Activated T-helper 1 cell treated with anti-CD3 and anti-CD28 coated beads, Interleukin-12 subunit alpha, Interleukin-12 subunit beta, Interleukin-2, Interleukin-4 antibody, amounts not matched to agents 30 ng/mL and 10 ng/mL and 1 ng/mL, durations not matched to agents 14 hours and 24 hours and 36 hours (primary cell): ENCODE measurements at regions of chr7 and their contacts with region 1.

Region 1: DNA sequence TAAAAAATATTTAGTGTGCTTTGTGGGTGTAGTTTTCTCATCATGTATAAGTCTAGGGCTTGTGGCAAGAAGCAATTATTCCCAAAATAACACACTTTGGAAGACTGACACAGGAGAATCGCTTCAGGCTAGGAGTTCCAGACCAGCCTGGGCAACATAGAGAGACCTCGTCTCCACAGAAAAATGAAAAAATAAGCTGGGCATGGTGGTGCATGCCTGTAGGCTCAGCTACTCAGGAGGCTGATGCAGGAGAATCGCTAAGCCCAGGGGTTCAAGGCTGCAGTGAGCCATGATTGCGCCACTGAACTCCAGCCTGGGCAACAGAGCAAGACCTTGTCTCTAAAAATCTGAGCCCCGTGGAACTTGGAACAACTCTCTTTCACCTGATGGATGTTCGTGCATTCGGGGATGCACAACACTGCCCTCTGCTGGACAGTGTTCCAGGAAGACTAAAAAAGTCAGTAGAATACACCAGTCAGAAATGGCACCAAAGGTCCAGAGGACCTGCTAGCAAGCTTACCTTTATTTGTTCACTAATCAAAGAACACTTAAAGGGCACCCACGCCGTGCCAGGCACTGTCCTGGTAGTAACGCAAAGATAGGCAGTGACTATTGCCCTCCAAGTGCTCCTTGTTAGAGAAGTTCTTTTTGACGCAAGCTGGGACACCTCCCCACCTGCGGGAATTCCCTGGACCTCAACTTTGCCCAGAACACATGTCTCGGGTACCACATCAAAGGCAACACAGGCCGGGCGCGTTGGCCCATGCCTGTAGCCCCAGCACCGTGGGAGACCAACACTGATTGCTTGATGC is 81.9 kb upstream of the CALN1 start:
- DNase-seq: peak; percentile 17
- H3K4me3 Mint-ChIP-seq: no peak overlapping the region
- H3K27ac Mint-ChIP-seq: no peak overlapping the region
- H3K4me1 Mint-ChIP-seq: no peaks in the 10 kb centered on the region
- H3K27me3 Mint-ChIP-seq: no peaks in the 10 kb centered on the region

Region 2: GRCh38 chr7:72416846-72417245 is 77.2 kb before region 1 on chr7:
- intact Hi-C with region 1: no loop called
- DNase-seq: no peak
- H3K4me3 Mint-ChIP-seq: no peak overlapping the region
- H3K27ac Mint-ChIP-seq: no peak overlapping the region
- H3K4me1 Mint-ChIP-seq: no peaks in the 10 kb centered on the region
- H3K27me3 Mint-ChIP-seq: no peaks in the 10 kb centered on the region

Region 3: GRCh38 chr7:72462311-72462710 is 31.7 kb before region 1 on chr7:
- intact Hi-C with region 1: loop called (anchors 1 kb)
- DNase-seq: no peak
- H3K4me3 Mint-ChIP-seq: no peak overlapping the region
- H3K27ac Mint-ChIP-seq: no peak overlapping the region
- H3K4me1 Mint-ChIP-seq: no peaks in the 10 kb centered on the region
- H3K27me3 Mint-ChIP-seq: no peaks in the 10 kb centered on the region

Region 4: GRCh38 chr7:72785166-72785955 is 291.3 kb after region 1 on chr7:
- intact Hi-C with region 1: loop called (anchors 5 kb)
- DNase-seq: no peak
- H3K4me3 Mint-ChIP-seq: no peak overlapping the region
- H3K27ac Mint-ChIP-seq: no peak overlapping the region
- H3K4me1 Mint-ChIP-seq: no peaks in the 10 kb centered on the region
- H3K27me3 Mint-ChIP-seq: no peaks in the 10 kb centered on the region